Mammary epithelial cell (primary cell): ENCODE measurements at regions of chr12 and their contacts with region 1.

Region 1: GRCh38 chr12:94297876-94298505 is 149.6 kb downstream of the PLXNC1 start:
- DNase-seq: no peak
- H3K4me3 ChIP-seq: no peak overlapping the region
- H3K27ac ChIP-seq: no peak overlapping the region
- H3K4me1 ChIP-seq: no peaks in the 10 kb centered on the region
- H3K27me3 ChIP-seq: no peaks in the 10 kb centered on the region
- CTCF ChIP-seq: no peak

Region 2: DNA sequence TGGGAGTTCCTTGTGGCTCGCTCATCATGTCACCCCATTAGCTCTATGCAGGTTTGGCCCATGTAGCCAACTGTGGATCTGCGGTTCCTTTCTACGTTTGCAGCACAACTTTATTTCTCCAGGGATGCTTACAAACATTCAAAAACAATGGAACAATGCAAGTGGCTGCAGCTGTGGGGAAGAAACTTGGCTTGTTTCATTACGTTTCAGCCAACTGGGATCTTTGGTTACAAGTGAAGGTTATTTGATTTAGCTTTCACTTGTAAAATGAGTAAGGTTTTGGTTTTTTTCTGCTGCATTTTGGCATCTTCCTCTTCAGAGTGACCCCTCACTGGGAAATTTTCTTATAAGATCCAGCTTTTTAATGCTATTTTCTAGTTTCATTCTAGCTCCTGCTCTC is 43.7 kb before region 1 on chr12:
- CTCF ChIA-PET with region 1: no interaction called
- dilution Hi-C with region 1: no loop called
- in situ Hi-C with region 1: no loop called
- intact Hi-C with region 1: no loop called
- DNase-seq: no peak
- H3K4me3 ChIP-seq: no peak overlapping the region
- H3K27ac ChIP-seq: no peak overlapping the region
- H3K4me1 ChIP-seq: no peaks in the 10 kb centered on the region
- H3K27me3 ChIP-seq: peaks cover 4% of the 10 kb centered on the region
- CTCF ChIP-seq: no peak

Region 3: DNA sequence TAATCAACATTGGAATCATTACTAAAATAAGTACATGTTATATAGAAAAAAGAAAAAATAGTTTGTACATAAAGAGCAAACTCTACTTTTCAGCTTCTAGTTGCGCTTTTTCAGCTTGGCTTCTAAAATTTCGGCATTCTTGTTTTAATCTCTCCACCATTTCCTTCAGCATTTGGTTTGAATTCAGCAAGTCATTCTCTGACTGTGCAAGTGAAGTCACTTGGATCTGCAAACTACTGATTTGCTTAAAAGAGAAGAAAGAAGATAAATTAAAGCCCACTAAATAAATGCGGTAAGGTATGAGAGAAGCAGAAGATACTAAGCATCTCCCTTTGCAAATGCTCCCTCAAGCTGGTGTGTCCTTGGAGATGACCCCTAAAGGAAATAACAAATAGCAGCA is 35.4 kb after region 1 on chr12:
- CTCF ChIA-PET with region 1: no interaction called
- dilution Hi-C with region 1: loop called (anchors 5 kb)
- in situ Hi-C with region 1: no loop called
- intact Hi-C with region 1: no loop called
- DNase-seq: no peak
- H3K4me3 ChIP-seq: no peak overlapping the region
- H3K27ac ChIP-seq: no peak overlapping the region
- H3K4me1 ChIP-seq: no peaks in the 10 kb centered on the region
- H3K27me3 ChIP-seq: no peaks in the 10 kb centered on the region
- CTCF ChIP-seq: no peak

Region 4: GRCh38 chr12:94405413-94406116 is 107.6 kb after region 1 on chr12:
- CTCF ChIA-PET with region 1: no interaction called
- dilution Hi-C with region 1: no loop called
- in situ Hi-C with region 1: no loop called
- intact Hi-C with region 1: no loop called
- DNase-seq: no peak
- H3K4me3 ChIP-seq: no peak overlapping the region
- H3K27ac ChIP-seq: no peak overlapping the region
- H3K4me1 ChIP-seq: no peaks in the 10 kb centered on the region
- H3K27me3 ChIP-seq: no peaks in the 10 kb centered on the region
- CTCF ChIP-seq: no peak